ENCODE measurements at regions of chrX and their contacts with region 1.

Region 1: DNA sequence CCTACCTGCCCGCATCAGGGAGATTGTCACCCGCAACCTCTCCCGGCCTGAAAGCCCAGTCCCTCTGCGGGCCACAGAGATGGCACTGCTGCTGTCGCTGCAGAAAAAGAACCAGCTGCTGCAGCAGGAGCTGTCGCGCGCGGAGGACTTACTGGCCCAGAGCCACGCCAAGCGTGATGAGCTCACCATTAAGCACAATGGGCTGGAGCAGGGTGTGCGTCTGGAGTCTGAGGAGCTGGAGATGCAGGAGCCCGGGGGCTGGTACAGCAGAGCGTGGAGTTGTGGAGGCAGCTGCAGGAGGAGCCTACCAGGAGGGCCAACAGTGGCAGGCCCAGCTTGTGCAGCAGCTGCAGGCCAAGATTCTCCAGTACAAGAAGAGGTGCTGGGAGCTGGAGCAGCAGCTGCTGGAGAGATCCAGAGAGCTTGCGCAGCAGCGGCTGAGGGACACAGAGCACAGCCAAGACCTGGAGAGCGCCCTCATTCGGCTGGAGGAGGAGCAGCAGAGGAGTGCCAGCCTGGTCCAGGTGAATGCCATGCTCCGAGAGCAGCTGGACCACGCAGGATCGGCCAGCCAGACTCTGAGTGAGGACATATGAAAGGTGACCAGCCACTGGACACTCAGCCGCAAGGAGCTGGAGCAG is 11.3 kb downstream of the SMIM10L2A start:
- DNase-seq: no peak
- ATAC-seq: peak; percentile 41
- H3K4me3 Mint-ChIP-seq: no peak overlapping the region
- H3K27ac Mint-ChIP-seq: no peak overlapping the region
- H3K4me1 Mint-ChIP-seq: peaks cover 7% of the 10 kb centered on the region; the same call in 1 of the 2 replicates
- H3K27me3 Mint-ChIP-seq: peaks cover 8% of the 10 kb centered on the region
- CTCF ChIP-seq: no peak

Region 2: DNA sequence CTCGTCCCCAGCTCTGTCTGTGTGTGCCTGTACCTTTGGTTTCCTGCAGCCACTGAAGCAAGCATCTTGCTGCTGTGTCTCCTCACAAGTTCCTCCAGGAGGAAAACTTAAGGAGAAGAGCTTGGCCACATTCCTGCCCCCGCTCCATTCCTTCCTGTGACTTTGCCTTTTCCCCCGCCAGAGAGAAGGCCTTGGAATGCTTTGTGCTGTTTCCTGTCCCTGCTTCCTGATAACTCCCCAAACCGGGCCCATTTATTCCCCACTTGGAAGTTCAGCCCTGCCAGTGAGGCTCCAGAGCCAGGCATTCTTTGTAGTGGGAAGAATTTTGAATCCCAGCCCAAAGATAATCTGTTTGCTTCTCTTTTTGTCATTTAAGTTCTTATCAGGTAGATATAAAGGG is 21.8 kb after region 1 on chrX:
- CTCF ChIA-PET with region 1: interaction called, 14 read pairs
- POLR2A ChIA-PET with region 1: no interaction called
- DNase-seq: no peak
- ATAC-seq: peak; percentile 60; the same call in 1 of the 2 replicates
- H3K4me3 Mint-ChIP-seq: no peak overlapping the region
- H3K27ac Mint-ChIP-seq: no peak overlapping the region
- H3K4me1 Mint-ChIP-seq: peaks cover 22% of the 10 kb centered on the region
- H3K27me3 Mint-ChIP-seq: 0 out of 2 replicates have a peak, but pooled peaks cover 4% of the 10 kb centered on the region
- CTCF ChIP-seq: no peak

Region 3: GRCh38 chrX:135463937-135464336 is 30.9 kb after region 1 on chrX:
- CTCF ChIA-PET with region 1: interaction called, 11 read pairs
- POLR2A ChIA-PET with region 1: no interaction called
- DNase-seq: no peak
- ATAC-seq: peak; percentile 74
- H3K4me3 Mint-ChIP-seq: no peak overlapping the region
- H3K27ac Mint-ChIP-seq: no peak overlapping the region
- H3K4me1 Mint-ChIP-seq: peaks cover 16% of the 10 kb centered on the region
- H3K27me3 Mint-ChIP-seq: peaks cover 47% of the 10 kb centered on the region
- CTCF ChIP-seq: no peak

Region 4: GRCh38 chrX:135531813-135532212 is 98.8 kb after region 1 on chrX:
- CTCF ChIA-PET with region 1: no interaction called
- POLR2A ChIA-PET with region 1: no interaction called
- DNase-seq: no peak
- ATAC-seq: no peak
- H3K4me3 Mint-ChIP-seq: no peak overlapping the region
- H3K27ac Mint-ChIP-seq: no peak overlapping the region
- H3K4me1 Mint-ChIP-seq: peaks cover 20% of the 10 kb centered on the region
- H3K27me3 Mint-ChIP-seq: no peaks in the 10 kb centered on the region
- CTCF ChIP-seq: no peak

Measured in WTC11 (cell line).